CD4-positive, alpha-beta memory T cell (primary cell): ENCODE measurements at regions of chr11 and their contacts with region 1.

Region 1: DNA sequence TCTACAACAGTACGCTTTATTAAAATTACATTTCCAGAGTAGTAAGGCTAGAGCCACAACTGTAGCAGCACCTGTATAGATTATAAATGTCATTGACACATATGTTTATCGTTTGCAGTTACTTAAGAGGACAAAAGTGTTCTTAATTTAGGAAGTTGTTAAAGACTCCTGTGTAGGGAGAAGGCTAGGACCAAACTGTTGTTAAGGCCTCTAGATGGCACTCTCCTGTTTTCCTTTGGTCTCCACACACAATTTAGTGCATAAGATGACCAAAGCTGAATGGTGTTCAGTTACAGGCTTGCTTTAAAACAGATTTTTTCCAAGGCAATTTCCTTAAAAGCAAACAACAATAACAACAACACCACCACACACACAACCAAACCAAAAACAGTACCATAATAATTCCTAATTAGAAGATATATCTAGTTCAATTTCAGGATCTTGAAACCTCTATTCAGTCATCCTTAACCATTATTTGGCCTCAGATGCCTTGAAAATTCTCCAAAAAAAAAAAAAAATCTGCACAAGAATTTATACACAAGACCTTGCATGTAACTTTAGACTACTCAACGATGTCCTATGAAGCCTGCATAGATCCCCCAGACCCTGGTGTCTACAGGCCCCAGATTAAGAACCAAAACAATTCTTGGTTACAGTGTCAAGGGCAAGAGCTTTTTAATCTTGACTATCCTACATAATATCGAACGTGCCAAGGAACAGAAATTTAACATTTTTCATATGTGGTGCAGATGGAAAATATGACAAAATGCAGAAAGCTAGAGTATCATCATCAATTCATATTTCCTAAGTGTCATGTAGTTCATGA is 42.6 kb upstream of the APOA1 start:
- DNase-seq: peak; percentile 39 to 56 (median 50)
- H3K4me3 ChIP-seq: no peak overlapping the region
- H3K4me3 Mint-ChIP-seq: no peak overlapping the region
- H3K27ac ChIP-seq: no peak overlapping the region
- H3K27ac Mint-ChIP-seq: peak overlapping the region; percentile 35 to 79 (median 64)
- H3K4me1 ChIP-seq: no peaks in the 10 kb centered on the region
- H3K4me1 Mint-ChIP-seq: peaks cover 10 to 12% (median 11%) of the 10 kb centered on the region in 4 donors
- H3K27me3 ChIP-seq: no peaks in the 10 kb centered on the region
- H3K27me3 Mint-ChIP-seq: no peaks in the 10 kb centered on the region

Region 2: GRCh38 chr11:116890193-116890592 is 10.2 kb after region 1 on chr11:
- CTCF ChIA-PET with region 1: interaction called, 13 read pairs
- POLR2A ChIA-PET with region 1: interaction called, 6 read pairs
- intact Hi-C with region 1: no loop called
- DNase-seq: peak in 3 of 5 donors; percentile 14 to 25 (median 17)
- H3K4me3 ChIP-seq: no peak overlapping the region
- H3K4me3 Mint-ChIP-seq: peak overlapping the region in 6 of 8 donors; percentile 14 to 62 (median 34)
- H3K27ac ChIP-seq: no peak overlapping the region
- H3K27ac Mint-ChIP-seq: peak overlapping the region; percentile 63 to 89 (median 86)
- H3K4me1 ChIP-seq: peaks cover 24% of the 10 kb centered on the region
- H3K4me1 Mint-ChIP-seq: peaks cover 21 to 44% (median 36%) of the 10 kb centered on the region in 4 donors
- H3K27me3 ChIP-seq: no peaks in the 10 kb centered on the region
- H3K27me3 Mint-ChIP-seq: no peaks in the 10 kb centered on the region

Region 3: GRCh38 chr11:116910378-116910777 is 30.4 kb after region 1 on chr11:
- CTCF ChIA-PET with region 1: no interaction called
- POLR2A ChIA-PET with region 1: no interaction called
- intact Hi-C with region 1: no loop called
- DNase-seq: no peak
- H3K4me3 ChIP-seq: no peak overlapping the region
- H3K4me3 Mint-ChIP-seq: peak overlapping the region in 1 of 8 donors; percentile 58
- H3K27ac ChIP-seq: no peak overlapping the region
- H3K27ac Mint-ChIP-seq: peak overlapping the region in 2 of 7 donors; percentile 32 to 57
- H3K4me1 ChIP-seq: peaks cover 9% of the 10 kb centered on the region
- H3K4me1 Mint-ChIP-seq: peaks cover 22 to 45% (median 37%) of the 10 kb centered on the region in 4 donors
- H3K27me3 ChIP-seq: no peaks in the 10 kb centered on the region
- H3K27me3 Mint-ChIP-seq: no peaks in the 10 kb centered on the region